Activated CD4-positive, alpha-beta memory T cell treated with anti-CD3 and anti-CD28 coated beads for 36 hours (primary cell): ENCODE measurements at regions of chr13 and their contacts with region 1.

Region 1: GRCh38 chr13:50081679-50082425 is 66.6 kb downstream of the KCNRG start:
- DNase-seq: peak; percentile 99
- H3K4me3 Mint-ChIP-seq: peak overlapping the region; percentile 99
- H3K27ac Mint-ChIP-seq: peak overlapping the region; percentile 100
- H3K4me1 Mint-ChIP-seq: peaks cover 41% of the 10 kb centered on the region
- H3K27me3 Mint-ChIP-seq: peaks cover 4% of the 10 kb centered on the region

Region 2: DNA sequence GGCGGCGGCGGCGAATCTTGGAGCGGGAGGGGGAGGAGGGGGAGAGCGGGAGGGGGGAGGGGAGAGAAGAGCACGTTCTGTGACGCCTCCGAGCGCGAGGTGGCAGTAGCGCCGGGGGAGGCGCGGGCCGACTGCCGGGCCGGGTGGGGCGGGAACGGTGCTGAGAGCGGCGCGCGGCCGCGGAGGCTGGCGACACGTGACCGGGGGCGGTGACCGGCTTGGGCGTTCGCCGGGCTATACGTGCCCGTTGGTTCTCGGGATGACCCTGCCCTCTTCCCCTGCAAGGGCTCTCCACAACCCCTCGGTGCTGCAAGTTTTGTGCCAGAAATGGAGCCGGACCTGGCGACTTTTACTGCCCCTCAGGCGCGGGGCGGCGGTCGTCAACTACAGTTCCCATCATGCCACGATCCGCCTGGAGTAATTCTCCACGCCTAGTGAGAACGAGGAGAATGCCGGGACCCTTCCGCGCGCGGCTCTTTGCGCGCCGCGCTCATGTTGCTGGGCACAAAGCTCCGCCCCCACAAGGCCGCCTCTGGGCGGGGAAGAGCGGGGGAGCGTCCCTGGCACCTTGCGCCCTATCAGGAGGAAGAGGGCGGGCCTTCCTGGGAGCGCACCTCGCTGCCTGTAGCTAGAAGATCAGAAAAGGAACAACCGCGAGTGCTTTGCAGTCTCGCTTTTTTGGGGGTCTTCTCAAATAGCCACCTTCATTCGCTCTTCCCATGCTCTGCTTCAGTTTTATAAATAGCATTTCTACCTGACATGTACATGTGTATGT is 289.1 kb before region 1 on chr13 and contains the start of gene KPNA3:
- CTCF ChIA-PET with region 1: no interaction called
- POLR2A ChIA-PET with region 1: interaction called, 6 read pairs
- intact Hi-C with region 1: loop called (anchors 2 kb)
- DNase-seq: peak; percentile 96
- H3K4me3 Mint-ChIP-seq: peak within 1 kb of the TSS; percentile 91
- H3K27ac Mint-ChIP-seq: peak within 1 kb of the TSS; percentile 93
- H3K4me1 Mint-ChIP-seq: peaks cover 27% of the 10 kb centered on the region
- H3K27me3 Mint-ChIP-seq: no peaks in the 10 kb centered on the region
- total RNA-seq, gene KPNA3: 42.0 to 44.0 TPM

Region 3: GRCh38 chr13:50106559-50106958 is 24.7 kb after region 1 on chr13:
- CTCF ChIA-PET with region 1: interaction called, 7 read pairs
- POLR2A ChIA-PET with region 1: interaction called, 3 read pairs
- intact Hi-C with region 1: loop called (anchors 1 kb)
- DNase-seq: no peak
- H3K4me3 Mint-ChIP-seq: no peak overlapping the region
- H3K27ac Mint-ChIP-seq: peak overlapping the region; percentile 44
- H3K4me1 Mint-ChIP-seq: peaks cover 31% of the 10 kb centered on the region
- H3K27me3 Mint-ChIP-seq: no peaks in the 10 kb centered on the region

Region 4: GRCh38 chr13:50167224-50167947 is 85.5 kb after region 1 on chr13:
- CTCF ChIA-PET with region 1: no interaction called
- POLR2A ChIA-PET with region 1: no interaction called
- intact Hi-C with region 1: loop called (anchors 1 kb)
- DNase-seq: no peak
- H3K4me3 Mint-ChIP-seq: no peak overlapping the region
- H3K27ac Mint-ChIP-seq: no peak overlapping the region
- H3K4me1 Mint-ChIP-seq: peaks cover 15% of the 10 kb centered on the region
- H3K27me3 Mint-ChIP-seq: peaks cover 13% of the 10 kb centered on the region

Region 5: GRCh38 chr13:50425772-50426171 is 343.9 kb after region 1 on chr13:
- CTCF ChIA-PET with region 1: no interaction called
- POLR2A ChIA-PET with region 1: no interaction called
- intact Hi-C with region 1: loop called (anchors 5 kb)
- DNase-seq: no peak
- H3K4me3 Mint-ChIP-seq: no peak overlapping the region
- H3K27ac Mint-ChIP-seq: no peak overlapping the region
- H3K4me1 Mint-ChIP-seq: peaks cover 35% of the 10 kb centered on the region
- H3K27me3 Mint-ChIP-seq: no peaks in the 10 kb centered on the region

Region 6: GRCh38 chr13:50893211-50893852 is 811.5 kb after region 1 on chr13:
- CTCF ChIA-PET with region 1: no interaction called
- POLR2A ChIA-PET with region 1: no interaction called
- intact Hi-C with region 1: loop called (anchors 5 kb)
- DNase-seq: peak; percentile 16
- H3K4me3 Mint-ChIP-seq: peak overlapping the region; percentile 53
- H3K27ac Mint-ChIP-seq: peak overlapping the region; percentile 84
- H3K4me1 Mint-ChIP-seq: peaks cover 39% of the 10 kb centered on the region
- H3K27me3 Mint-ChIP-seq: no peaks in the 10 kb centered on the region

Region 7: GRCh38 chr13:51583875-51584730 is 1502.3 kb after region 1 on chr13 and contains the start of gene WDFY2:
- CTCF ChIA-PET with region 1: no interaction called
- POLR2A ChIA-PET with region 1: no interaction called
- intact Hi-C with region 1: loop called (anchors 5 kb)
- DNase-seq: peak; percentile 99
- H3K4me3 Mint-ChIP-seq: peak within 1 kb of the TSS; percentile 87
- H3K27ac Mint-ChIP-seq: peak within 1 kb of the TSS; percentile 94
- H3K4me1 Mint-ChIP-seq: peaks cover 35% of the 10 kb centered on the region
- H3K27me3 Mint-ChIP-seq: no peaks in the 10 kb centered on the region
- total RNA-seq, gene WDFY2: 9.3 to 11.2 TPM